ENCODE measurements at regions of chr3 and their contacts with region 1.

Region 1: DNA sequence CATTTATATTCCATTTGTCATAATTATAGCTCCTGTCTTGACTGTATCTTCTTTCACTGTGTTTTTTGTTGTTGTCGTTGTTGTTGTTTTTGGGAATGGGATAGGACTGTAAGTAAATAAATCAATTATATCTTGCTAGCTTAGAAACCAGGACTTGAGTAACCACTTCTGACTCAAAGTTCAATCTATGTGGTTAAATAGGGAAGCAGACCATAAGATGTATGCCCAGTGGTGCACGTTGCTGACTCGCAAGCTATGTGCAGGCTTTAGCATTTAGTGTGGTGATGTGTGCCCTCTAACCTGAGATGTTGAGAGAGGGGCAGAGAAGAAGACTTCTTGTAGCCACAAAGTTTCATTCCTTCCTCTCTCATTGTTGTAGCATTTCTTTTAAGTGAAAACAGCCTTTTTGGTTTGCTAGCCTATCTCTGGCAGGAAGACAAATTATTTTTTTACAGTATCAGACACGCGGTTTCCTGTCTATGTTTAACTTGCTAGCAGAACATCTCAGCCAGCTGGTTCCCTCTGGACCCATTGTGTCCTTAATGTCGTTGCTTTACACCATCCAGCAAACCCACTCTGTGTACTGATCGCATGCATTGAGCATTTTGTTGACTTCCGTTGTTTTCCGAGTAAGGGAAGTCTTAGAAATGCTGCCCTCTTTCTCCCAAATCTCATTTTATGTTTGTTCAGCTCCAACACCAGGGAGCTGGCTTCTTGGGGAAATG is 52.1 kb downstream of the TGFBR2 start:
- DNase-seq: peak; percentile 62
- H3K4me3 Mint-ChIP-seq: peak overlapping the region; percentile 62
- H3K27ac Mint-ChIP-seq: peak overlapping the region; percentile 97
- H3K4me1 Mint-ChIP-seq: peaks cover 98% of the 10 kb centered on the region
- H3K27me3 Mint-ChIP-seq: no peaks in the 10 kb centered on the region

Region 2: GRCh38 chr3:30353711-30354467 is 304.6 kb before region 1 on chr3:
- CTCF ChIA-PET with region 1: no interaction called
- intact Hi-C with region 1: loop called (anchors 1 kb)
- DNase-seq: peak; percentile 74
- H3K4me3 Mint-ChIP-seq: no peak overlapping the region
- H3K27ac Mint-ChIP-seq: peak overlapping the region; percentile 59
- H3K4me1 Mint-ChIP-seq: peaks cover 72% of the 10 kb centered on the region
- H3K27me3 Mint-ChIP-seq: no peaks in the 10 kb centered on the region

Region 3: GRCh38 chr3:30611613-30612436 is 46.7 kb before region 1 on chr3:
- CTCF ChIA-PET with region 1: interaction called, 4 read pairs
- intact Hi-C with region 1: loop called (anchors 1 kb)
- DNase-seq: peak; percentile 25
- H3K4me3 Mint-ChIP-seq: peak overlapping the region; percentile 83
- H3K27ac Mint-ChIP-seq: peak overlapping the region; percentile 98
- H3K4me1 Mint-ChIP-seq: peaks cover 57% of the 10 kb centered on the region
- H3K27me3 Mint-ChIP-seq: no peaks in the 10 kb centered on the region

Region 4: DNA sequence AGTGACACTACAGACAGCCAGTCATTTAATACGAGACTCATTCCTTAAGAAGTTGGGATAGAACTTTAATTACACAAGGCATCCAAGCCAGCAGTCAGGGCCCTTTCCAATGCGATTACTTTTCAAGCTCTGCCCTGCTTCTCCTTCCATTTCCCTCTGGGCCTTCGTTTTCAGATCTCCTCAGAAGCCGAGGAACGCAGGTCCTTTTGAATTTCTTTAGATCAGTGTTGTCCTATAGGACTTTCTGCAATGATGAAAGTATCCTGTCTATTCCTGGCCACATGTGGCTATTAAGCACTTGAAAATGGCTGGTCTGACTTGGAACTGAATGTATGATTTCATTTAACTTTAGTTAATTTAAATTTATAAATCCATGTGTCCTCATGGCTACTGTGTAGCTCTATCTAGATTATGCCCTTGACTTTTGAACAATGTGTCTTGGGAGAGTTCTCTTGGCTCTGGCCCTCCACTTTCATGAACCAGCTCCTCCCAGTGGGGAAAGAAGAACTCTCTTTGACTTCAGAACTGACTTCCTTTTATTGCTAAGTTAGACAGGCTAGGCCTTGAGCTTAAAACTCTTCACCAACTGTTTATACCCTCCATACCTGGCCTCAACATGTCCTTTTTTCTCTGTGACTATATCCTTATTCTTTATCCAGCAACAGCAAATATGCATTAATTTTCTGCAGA is 29.4 kb before region 1 on chr3:
- CTCF ChIA-PET with region 1: interaction called, 6 read pairs
- intact Hi-C with region 1: loop called (anchors 1 kb)
- DNase-seq: peak; percentile 55
- H3K4me3 Mint-ChIP-seq: peak overlapping the region; percentile 53
- H3K27ac Mint-ChIP-seq: peak overlapping the region; percentile 98
- H3K4me1 Mint-ChIP-seq: peaks cover 91% of the 10 kb centered on the region
- H3K27me3 Mint-ChIP-seq: no peaks in the 10 kb centered on the region

Region 5: DNA sequence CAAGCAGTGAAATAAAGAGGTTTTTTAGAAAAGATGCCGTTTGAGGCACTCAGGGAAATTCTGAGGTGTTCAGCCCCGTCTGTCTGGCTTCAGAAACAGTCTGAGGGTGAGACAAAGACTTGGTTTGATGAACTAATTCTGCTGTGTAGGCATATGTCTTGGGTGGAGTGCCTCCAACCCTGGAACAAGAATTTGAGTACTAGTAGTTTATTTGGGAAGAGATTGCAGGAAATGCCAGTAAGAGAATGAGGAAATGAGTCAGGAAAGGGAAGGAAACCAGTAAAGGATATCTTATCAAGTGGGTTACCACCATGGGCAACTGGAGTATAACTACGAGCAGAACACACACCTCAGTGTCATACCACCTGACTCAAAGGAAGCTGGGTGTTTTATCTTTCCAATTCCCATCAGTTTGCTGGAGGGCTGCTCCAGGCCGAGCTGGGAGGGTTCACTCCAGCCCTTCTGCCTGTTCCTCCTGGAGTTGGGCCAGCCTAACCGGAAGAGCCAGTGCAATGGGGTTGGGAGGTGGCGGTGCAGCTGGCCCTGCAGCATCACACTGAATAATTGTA is 23.2 kb after region 1 on chr3:
- CTCF ChIA-PET with region 1: interaction called, 7 read pairs
- intact Hi-C with region 1: loop called (anchors 1 kb)
- DNase-seq: peak; percentile 45
- H3K4me3 Mint-ChIP-seq: peak overlapping the region; percentile 18
- H3K27ac Mint-ChIP-seq: peak overlapping the region; percentile 93
- H3K4me1 Mint-ChIP-seq: peaks cover 100% of the 10 kb centered on the region
- H3K27me3 Mint-ChIP-seq: no peaks in the 10 kb centered on the region

Measured in activated naive CD4-positive, alpha-beta T cell treated with anti-CD3 and anti-CD28 coated beads for 36 hours (primary cell).